A673 (cell line): ENCODE measurements at regions of chr5 and their contacts with region 1.

Region 1: GRCh38 chr5:3931976-3932375 is 336.3 kb downstream of the IRX1 start:
- DNase-seq: no peak
- H3K4me3 ChIP-seq: no peak overlapping the region
- H3K27ac ChIP-seq: no peak overlapping the region
- H3K4me1 ChIP-seq: no peaks in the 10 kb centered on the region
- H3K27me3 ChIP-seq: no peaks in the 10 kb centered on the region
- CTCF ChIP-seq: no peak

Region 2: GRCh38 chr5:3878267-3878666 is 53.7 kb before region 1 on chr5:
- CTCF ChIA-PET with region 1: no interaction called
- POLR2A ChIA-PET with region 1: no interaction called
- intact Hi-C with region 1: loop called (anchors 10 kb)
- DNase-seq: no peak
- H3K4me3 ChIP-seq: no peak overlapping the region
- H3K27ac ChIP-seq: no peak overlapping the region
- H3K4me1 ChIP-seq: no peaks in the 10 kb centered on the region
- H3K27me3 ChIP-seq: no peaks in the 10 kb centered on the region
- CTCF ChIP-seq: no peak